ENCODE measurements at regions of chr1 and their contacts with region 1.

Region 1: GRCh38 chr1:115138968-115139367 is 49.7 kb upstream of the TSPAN2 start:
- DNase-seq: peak; percentile 86
- H3K4me3 ChIP-seq: no peak overlapping the region
- H3K27ac ChIP-seq: peak overlapping the region; percentile 56
- H3K4me1 ChIP-seq: peaks cover 48% of the 10 kb centered on the region
- H3K27me3 ChIP-seq: no peaks in the 10 kb centered on the region
- CTCF ChIP-seq: peak; percentile 94

Region 2: GRCh38 chr1:114986286-114986685 is 152.7 kb before region 1 on chr1:
- intact Hi-C with region 1: no loop called
- DNase-seq: no peak
- H3K4me3 ChIP-seq: no peak overlapping the region
- H3K27ac ChIP-seq: no peak overlapping the region
- H3K4me1 ChIP-seq: no peaks in the 10 kb centered on the region
- H3K27me3 ChIP-seq: peaks cover 3% of the 10 kb centered on the region
- CTCF ChIP-seq: no peak

Region 3: GRCh38 chr1:115275212-115275611 is 136.2 kb after region 1 on chr1:
- intact Hi-C with region 1: loop called (anchors 10 kb)
- DNase-seq: no peak
- H3K4me3 ChIP-seq: no peak overlapping the region
- H3K27ac ChIP-seq: peak overlapping the region; percentile 70
- H3K4me1 ChIP-seq: no peaks in the 10 kb centered on the region
- H3K27me3 ChIP-seq: no peaks in the 10 kb centered on the region
- CTCF ChIP-seq: peak; percentile 50

Region 4: GRCh38 chr1:115323376-115324004 is 184.5 kb after region 1 on chr1:
- intact Hi-C with region 1: no loop called
- DNase-seq: no peak
- H3K4me3 ChIP-seq: no peak overlapping the region
- H3K27ac ChIP-seq: peak overlapping the region; percentile 32
- H3K4me1 ChIP-seq: peaks cover 48% of the 10 kb centered on the region
- H3K27me3 ChIP-seq: no peaks in the 10 kb centered on the region
- CTCF ChIP-seq: no peak

Region 5: GRCh38 chr1:115463363-115463746 is 324.4 kb after region 1 on chr1:
- intact Hi-C with region 1: loop called (anchors 5 kb)
- DNase-seq: no peak
- H3K4me3 ChIP-seq: no peak overlapping the region
- H3K27ac ChIP-seq: no peak overlapping the region
- H3K4me1 ChIP-seq: no peaks in the 10 kb centered on the region
- H3K27me3 ChIP-seq: no peaks in the 10 kb centered on the region
- CTCF ChIP-seq: peak; percentile 63

Region 6: DNA sequence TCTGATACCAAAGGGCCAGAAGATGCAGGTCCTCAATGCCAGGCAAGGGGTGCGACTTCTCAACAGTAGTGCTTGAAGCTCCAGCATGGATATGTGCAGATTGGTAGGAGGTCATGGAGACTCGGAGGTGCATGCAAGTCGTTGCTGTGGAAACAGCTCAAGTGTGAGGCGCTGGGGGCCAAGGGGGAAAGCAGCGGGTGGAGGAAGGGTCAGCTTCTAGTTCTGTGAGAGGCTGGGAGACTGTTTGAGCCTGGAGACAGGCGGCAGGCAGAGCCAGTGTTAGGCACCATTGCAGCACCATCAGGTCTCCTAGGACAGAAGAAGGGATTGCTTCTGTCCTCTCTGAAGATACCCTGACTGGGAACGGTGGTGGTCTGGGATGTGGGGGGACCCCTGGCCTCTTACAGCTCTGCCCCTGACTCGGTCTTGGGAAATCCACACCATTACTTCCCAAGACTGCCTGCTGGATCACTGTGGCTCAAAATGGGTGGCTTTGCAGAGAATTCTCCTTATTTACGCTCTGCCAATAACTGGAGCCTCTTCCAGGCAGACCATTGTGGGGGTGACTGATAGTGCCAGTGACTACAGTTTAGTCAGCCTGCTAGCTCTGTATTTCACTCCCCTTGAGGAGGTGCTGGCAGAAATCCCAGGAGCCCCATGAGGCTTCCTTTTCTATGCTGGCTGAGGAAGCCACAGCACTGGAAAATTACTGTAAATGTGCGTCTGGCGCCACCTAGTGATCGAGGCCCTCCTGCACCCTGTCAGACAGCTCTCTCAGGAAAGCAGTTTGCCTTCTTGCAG is 456.5 kb after region 1 on chr1:
- intact Hi-C with region 1: loop called (anchors 10 kb)
- DNase-seq: peak; percentile 91
- H3K4me3 ChIP-seq: no peak overlapping the region
- H3K27ac ChIP-seq: peak overlapping the region; percentile 42
- H3K4me1 ChIP-seq: peaks cover 23% of the 10 kb centered on the region
- H3K27me3 ChIP-seq: no peaks in the 10 kb centered on the region
- CTCF ChIP-seq: peak; percentile 94